H1 (cell line): ENCODE measurements at regions of chr14 and their contacts with region 1.

Region 1: GRCh38 chr14:76918751-76919543 is 92.7 kb downstream of the LRRC74A start:
- DNase-seq: no peak
- H3K4me3 ChIP-seq: 0 out of 8 replicates have a peak overlapping the region, but pooled peaks of 1 of the 4 experiments have one; percentile 5
- H3K27ac ChIP-seq: peak overlapping the region; percentile 53; the same call in 1 of the 2 replicates
- H3K4me1 ChIP-seq: peaks cover 17 to 53% (median 42%) of the 10 kb centered on the region in 4 experiments
- H3K27me3 ChIP-seq: no peaks in the 10 kb centered on the region
- CTCF ChIP-seq: peak in 2 of 3 experiments; percentile 8 to 17; a peak in 1 of 4 replicates
- EP300 ChIP-seq: no peak
- POLR2A ChIP-seq: no peak
- RAD21 ChIP-seq: no peak

Region 2: GRCh38 chr14:76887196-76887595 is 31.8 kb before region 1 on chr14:
- CTCF ChIA-PET with region 1: interaction called, 424 read pairs
- POLR2A ChIA-PET with region 1: no interaction called
- DNase-seq: no peak
- H3K4me3 ChIP-seq: no peak overlapping the region
- H3K27ac ChIP-seq: no peak overlapping the region
- H3K4me1 ChIP-seq: peaks cover 0 to 6% (median 3%) of the 10 kb centered on the region in 4 experiments; a peak in 4 of 7 replicates
- H3K27me3 ChIP-seq: peaks cover 0 to 3% (median 1%) of the 10 kb centered on the region in 4 experiments; a peak in 1 of 7 replicates
- CTCF ChIP-seq: no peak
- EP300 ChIP-seq: no peak
- POLR2A ChIP-seq: no peak
- RAD21 ChIP-seq: no peak

Region 3: GRCh38 chr14:76937181-76938091 is 18.5 kb after region 1 on chr14:
- CTCF ChIA-PET with region 1: interaction called, 403 read pairs
- POLR2A ChIA-PET with region 1: interaction called, 18 read pairs
- DNase-seq: no peak
- H3K4me3 ChIP-seq: no peak overlapping the region
- H3K27ac ChIP-seq: peak overlapping the region; percentile 10; the same call in 1 of the 2 replicates
- H3K4me1 ChIP-seq: peaks cover 0 to 29% (median 16%) of the 10 kb centered on the region in 4 experiments; a peak in 6 of 7 replicates
- H3K27me3 ChIP-seq: no peaks in the 10 kb centered on the region
- CTCF ChIP-seq: no peak
- EP300 ChIP-seq: no peak
- POLR2A ChIP-seq: no peak
- RAD21 ChIP-seq: no peak

Region 4: DNA sequence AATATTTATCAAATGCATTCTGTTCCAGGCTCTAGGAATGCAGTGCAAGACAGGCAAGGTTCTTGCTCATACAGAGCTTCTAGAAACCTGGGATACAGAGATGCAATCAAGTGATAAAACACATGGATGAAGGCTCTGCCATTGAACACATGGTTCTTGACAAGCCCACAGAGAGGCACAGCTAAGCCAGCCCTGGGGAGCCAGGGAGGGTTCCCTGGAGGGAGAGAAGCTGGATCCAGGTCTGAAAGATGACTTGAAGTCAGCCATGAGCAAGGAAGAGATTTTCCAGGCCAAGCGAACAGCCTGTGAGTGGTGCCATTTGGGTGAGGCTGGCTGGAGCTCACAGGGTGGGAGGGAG is 43.3 kb after region 1 on chr14:
- CTCF ChIA-PET with region 1: interaction called, 151 read pairs
- POLR2A ChIA-PET with region 1: interaction called, 28 read pairs
- DNase-seq: no peak
- H3K4me3 ChIP-seq: peak overlapping the region in 1 of 4 experiments; percentile 44; a peak in 2 of 8 replicates
- H3K27ac ChIP-seq: peak overlapping the region; percentile 55; the same call in 1 of the 2 replicates
- H3K4me1 ChIP-seq: peaks cover 27 to 37% (median 32%) of the 10 kb centered on the region in 4 experiments
- H3K27me3 ChIP-seq: no peaks in the 10 kb centered on the region
- CTCF ChIP-seq: no peak
- EP300 ChIP-seq: no peak
- POLR2A ChIP-seq: no peak
- RAD21 ChIP-seq: no peak

Region 5: DNA sequence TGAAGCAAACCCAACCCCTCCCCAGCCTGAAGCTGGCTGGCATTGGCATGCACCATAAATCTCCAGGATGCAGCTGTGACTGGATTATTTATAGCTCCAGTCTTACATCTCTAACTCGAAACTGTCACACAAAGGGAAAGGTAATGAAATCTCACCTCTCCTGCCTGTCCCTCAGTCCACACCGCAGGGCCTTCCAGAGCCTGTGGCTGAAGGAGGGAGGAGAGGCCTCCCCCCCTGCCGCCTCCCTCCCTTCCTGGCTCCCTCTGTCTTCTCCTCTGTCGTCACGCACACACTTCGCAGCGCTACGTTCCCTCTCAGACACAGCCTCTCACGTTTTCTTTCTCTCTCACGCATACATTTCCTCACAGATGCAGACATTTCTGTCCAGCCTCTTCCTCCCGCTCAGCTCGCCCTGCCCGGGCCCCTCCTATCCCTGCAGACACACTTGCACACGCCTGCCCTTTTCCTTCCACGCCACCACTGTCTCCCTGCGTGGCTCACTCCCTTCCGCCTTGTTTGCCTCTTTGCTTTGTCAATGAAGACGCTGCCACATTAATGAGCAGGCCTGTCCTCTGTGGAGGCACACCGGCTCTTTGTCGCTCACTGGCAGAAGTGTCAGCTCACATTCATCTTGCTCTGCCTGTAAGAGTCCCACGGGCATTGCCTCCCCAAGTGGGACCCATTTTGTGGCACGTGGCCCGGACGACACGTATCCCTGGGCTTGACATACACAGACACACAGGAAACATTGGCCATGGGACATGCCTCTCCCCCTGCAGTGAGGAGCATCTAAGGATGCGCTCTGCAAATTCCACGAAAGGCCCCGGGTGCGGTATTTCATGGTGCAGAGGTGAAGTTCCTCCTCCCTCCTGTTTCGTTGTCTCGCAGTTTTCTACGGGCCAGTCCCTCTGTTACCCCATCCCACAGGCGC is 81.7 kb after region 1 on chr14:
- CTCF ChIA-PET with region 1: interaction called, 280 read pairs
- POLR2A ChIA-PET with region 1: interaction called, 3 read pairs
- DNase-seq: no peak
- H3K4me3 ChIP-seq: no peak overlapping the region
- H3K27ac ChIP-seq: no peak overlapping the region
- H3K4me1 ChIP-seq: peaks cover 11 to 28% (median 18%) of the 10 kb centered on the region in 4 experiments
- H3K27me3 ChIP-seq: peaks cover 0 to 1% (median 0%) of the 10 kb centered on the region in 4 experiments; a peak in 1 of 7 replicates
- CTCF ChIP-seq: no peak
- EP300 ChIP-seq: no peak
- POLR2A ChIP-seq: no peak
- RAD21 ChIP-seq: no peak

Region 6: DNA sequence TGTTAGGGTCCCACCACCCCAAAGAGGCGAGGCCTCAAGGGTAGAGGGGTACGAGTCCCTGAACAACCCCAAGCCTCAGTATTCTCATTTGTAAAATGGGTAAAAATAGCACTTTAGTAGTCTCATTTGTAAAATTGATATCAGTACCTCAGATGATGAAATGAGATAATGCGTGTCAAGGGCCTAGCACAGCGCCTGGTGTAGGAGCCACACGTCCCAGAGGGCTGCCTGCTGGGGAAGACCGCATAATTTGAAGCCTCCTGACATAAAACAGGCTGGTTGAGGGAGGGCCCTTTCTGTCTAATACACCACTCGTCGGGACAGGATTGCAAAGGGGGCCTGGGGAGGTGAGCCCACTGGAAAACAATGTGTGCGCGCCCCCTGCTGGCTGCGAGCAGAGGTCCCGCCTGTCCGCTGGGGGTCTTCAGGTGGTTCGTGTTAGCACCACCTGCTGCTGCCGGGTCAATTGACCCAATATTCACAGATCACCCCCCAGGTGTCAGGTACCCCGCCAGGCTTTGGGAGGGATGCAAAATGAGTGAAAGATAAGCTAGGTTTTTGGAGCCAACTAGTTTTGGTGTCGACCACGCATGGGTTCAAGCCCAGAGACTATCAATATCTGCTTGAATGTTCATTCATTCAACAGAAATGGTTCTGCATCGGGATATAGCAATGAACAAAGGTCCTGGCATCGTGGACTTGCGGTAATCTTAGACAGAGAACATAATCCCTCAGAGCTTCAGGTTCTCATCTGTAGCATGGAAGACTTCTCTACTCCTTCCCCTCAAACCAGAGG is 134.3 kb after region 1 on chr14:
- CTCF ChIA-PET with region 1: interaction called, 237 read pairs
- POLR2A ChIA-PET with region 1: no interaction called
- DNase-seq: peak; percentile 70 to 93
- H3K4me3 ChIP-seq: no peak overlapping the region
- H3K27ac ChIP-seq: no peak overlapping the region
- H3K4me1 ChIP-seq: peaks cover 0 to 12% (median 7%) of the 10 kb centered on the region in 4 experiments; a peak in 5 of 7 replicates
- H3K27me3 ChIP-seq: no peaks in the 10 kb centered on the region
- CTCF ChIP-seq: peak; percentile 89 to 98 (median 98)
- EP300 ChIP-seq: peak in 1 of 2 experiments; percentile 70; a peak in 1 of 3 replicates
- POLR2A ChIP-seq: no peak
- RAD21 ChIP-seq: peak; percentile 97 to 99

Region 7: DNA sequence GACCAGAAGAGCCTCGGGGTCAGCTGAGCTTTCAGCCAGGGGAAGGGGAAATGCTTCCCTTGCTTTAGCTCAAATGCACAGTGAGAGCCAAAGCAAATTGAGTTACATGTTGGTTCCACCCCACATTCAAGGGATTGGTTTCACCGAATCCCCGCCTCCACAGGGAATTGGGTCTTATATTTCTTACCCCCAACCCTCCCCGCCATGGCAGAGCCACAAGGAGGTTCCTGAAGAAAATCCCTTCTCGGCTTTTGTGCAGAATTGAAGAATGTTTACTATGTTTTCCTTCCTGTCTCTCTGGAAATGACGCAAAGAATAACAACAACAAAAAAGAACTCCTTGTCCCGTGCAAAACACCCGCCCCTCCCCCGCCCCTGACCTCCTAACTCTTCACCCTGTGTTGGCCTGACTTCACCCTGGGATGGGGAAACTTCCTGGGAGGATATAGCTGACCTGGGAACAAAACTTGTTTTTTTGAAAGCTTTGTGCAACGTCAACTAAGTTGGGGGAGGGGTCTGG is 157.2 kb after region 1 on chr14:
- CTCF ChIA-PET with region 1: interaction called, 199 read pairs
- POLR2A ChIA-PET with region 1: no interaction called
- DNase-seq: no peak
- H3K4me3 ChIP-seq: peak overlapping the region in 2 of 4 experiments; percentile 7 to 36; a peak in 3 of 8 replicates
- H3K27ac ChIP-seq: peak overlapping the region; percentile 46; the same call in 1 of the 2 replicates
- H3K4me1 ChIP-seq: peaks cover 4 to 12% (median 11%) of the 10 kb centered on the region in 4 experiments; a peak in 5 of 7 replicates
- H3K27me3 ChIP-seq: no peaks in the 10 kb centered on the region; a peak in 1 of 7 replicates
- CTCF ChIP-seq: no peak
- EP300 ChIP-seq: peak in 1 of 2 experiments; percentile 24; a peak in 1 of 3 replicates
- POLR2A ChIP-seq: no peak
- RAD21 ChIP-seq: no peak